GM12878 (cell line): ENCODE measurements at regions of chr3 and their contacts with region 1.

Region 1: DNA sequence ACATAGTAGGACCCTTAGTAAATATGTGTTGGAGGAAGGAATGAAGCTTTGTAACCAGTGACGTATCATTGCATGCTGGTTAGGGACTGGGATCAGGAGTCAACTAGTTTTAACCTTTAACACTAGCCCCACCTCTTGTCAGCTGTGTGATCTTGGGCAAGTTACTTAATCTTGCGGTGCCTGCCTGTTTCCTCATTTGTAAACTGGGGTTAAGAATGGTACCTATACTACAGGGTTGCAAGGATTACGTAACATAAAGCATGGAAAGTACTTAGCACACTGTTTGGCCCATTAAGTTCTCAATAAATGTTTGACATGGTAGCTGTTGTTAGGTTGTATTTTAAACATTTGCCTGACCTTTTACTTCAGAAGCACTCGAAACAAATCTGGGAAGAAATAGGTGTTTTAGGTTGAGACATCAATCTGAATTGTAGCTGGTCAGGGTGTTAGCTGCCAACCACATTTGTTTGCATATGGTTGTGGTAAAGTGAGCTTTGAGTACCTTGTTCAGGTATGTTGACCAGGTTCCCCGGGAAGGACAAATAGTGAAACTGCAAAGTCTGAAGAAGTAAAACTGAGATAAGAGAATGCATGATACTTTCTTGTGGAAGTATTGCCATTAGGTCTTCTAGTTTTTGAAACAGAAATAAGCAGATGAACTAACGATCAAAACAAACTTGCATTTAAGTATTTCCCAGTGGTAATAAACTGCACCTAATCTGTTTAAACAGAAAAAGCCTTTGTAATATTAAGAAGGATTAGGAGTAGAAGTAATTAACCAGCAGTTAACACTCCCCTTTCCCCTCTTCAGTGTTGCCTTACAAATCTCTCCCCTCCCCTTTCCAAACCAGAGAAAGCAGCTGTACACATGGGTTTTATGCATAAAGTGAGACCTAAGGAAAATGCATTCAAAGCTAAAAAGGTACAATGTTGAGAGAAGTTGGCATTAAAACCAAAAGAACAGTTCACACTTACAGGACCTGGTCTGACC is 25.8 kb upstream of the SCAANT1 start:
- DNase-seq: peak; percentile 55
- ATAC-seq: peak; percentile 83
- H3K4me3 ChIP-seq: peak overlapping the region; percentile 11; the same call in 1 of the 2 replicates
- H3K27ac ChIP-seq: peak overlapping the region; percentile 44; the same call in 1 of the 2 replicates
- H3K4me1 ChIP-seq: peaks cover 43% of the 10 kb centered on the region
- H3K27me3 ChIP-seq: no peaks in the 10 kb centered on the region
- CTCF ChIP-seq: peak in 1 of 3 experiments; percentile 27; a peak in 1 of 6 replicates
- EP300 ChIP-seq: 0 out of 4 replicates have a peak, but pooled peaks of 1 of the 2 experiments have one; percentile 8
- POLR2A ChIP-seq: no peak
- RAD21 ChIP-seq: no peak

Region 2: GRCh38 chr3:63927422-63928280 is 10.3 kb before region 1 on chr3:
- CTCF ChIA-PET with region 1: interaction called, 7 read pairs
- POLR2A ChIA-PET with region 1: interaction called, 15 read pairs
- RAD21 ChIA-PET with region 1: interaction called, 15 read pairs
- SMC1A ChIA-PET with region 1: interaction called, 23 read pairs
- in situ Hi-C with region 1: no loop called
- intact Hi-C with region 1: no loop called
- DNase-seq: no peak
- ATAC-seq: peak; percentile 86
- H3K4me3 ChIP-seq: no peak overlapping the region
- H3K27ac ChIP-seq: no peak overlapping the region; the same call in 1 of the 2 replicates
- H3K4me1 ChIP-seq: peaks cover 26% of the 10 kb centered on the region
- H3K27me3 ChIP-seq: no peaks in the 10 kb centered on the region
- CTCF ChIP-seq: no peak
- EP300 ChIP-seq: peak; percentile 39 to 47; a peak in 1 of 4 replicates
- POLR2A ChIP-seq: no peak
- RAD21 ChIP-seq: no peak

Region 3: GRCh38 chr3:63951492-63952247 is 13.7 kb after region 1 on chr3:
- CTCF ChIA-PET with region 1: interaction called, 10 read pairs
- POLR2A ChIA-PET with region 1: interaction called, 4 read pairs
- RAD21 ChIA-PET with region 1: interaction called, 6 read pairs
- SMC1A ChIA-PET with region 1: interaction called, 32 read pairs
- in situ Hi-C with region 1: no loop called
- intact Hi-C with region 1: no loop called
- DNase-seq: no peak
- ATAC-seq: peak; percentile 73
- H3K4me3 ChIP-seq: peak overlapping the region; percentile 6; the same call in 1 of the 2 replicates
- H3K27ac ChIP-seq: peak overlapping the region; percentile 10; the same call in 1 of the 2 replicates
- H3K4me1 ChIP-seq: peaks cover 7% of the 10 kb centered on the region
- H3K27me3 ChIP-seq: no peaks in the 10 kb centered on the region
- CTCF ChIP-seq: no peak
- EP300 ChIP-seq: no peak
- POLR2A ChIP-seq: no peak
- RAD21 ChIP-seq: no peak